Head of caudate nucleus (tissue), 42 donors: ENCODE measurements at regions of chr10 and their contacts with region 1.

Region 1: GRCh38 chr10:102583435-102584417 is 60.6 kb upstream of the TRIM8 start:
- DNase-seq: peak; percentile 70 to 96 (median 91)

Region 2: DNA sequence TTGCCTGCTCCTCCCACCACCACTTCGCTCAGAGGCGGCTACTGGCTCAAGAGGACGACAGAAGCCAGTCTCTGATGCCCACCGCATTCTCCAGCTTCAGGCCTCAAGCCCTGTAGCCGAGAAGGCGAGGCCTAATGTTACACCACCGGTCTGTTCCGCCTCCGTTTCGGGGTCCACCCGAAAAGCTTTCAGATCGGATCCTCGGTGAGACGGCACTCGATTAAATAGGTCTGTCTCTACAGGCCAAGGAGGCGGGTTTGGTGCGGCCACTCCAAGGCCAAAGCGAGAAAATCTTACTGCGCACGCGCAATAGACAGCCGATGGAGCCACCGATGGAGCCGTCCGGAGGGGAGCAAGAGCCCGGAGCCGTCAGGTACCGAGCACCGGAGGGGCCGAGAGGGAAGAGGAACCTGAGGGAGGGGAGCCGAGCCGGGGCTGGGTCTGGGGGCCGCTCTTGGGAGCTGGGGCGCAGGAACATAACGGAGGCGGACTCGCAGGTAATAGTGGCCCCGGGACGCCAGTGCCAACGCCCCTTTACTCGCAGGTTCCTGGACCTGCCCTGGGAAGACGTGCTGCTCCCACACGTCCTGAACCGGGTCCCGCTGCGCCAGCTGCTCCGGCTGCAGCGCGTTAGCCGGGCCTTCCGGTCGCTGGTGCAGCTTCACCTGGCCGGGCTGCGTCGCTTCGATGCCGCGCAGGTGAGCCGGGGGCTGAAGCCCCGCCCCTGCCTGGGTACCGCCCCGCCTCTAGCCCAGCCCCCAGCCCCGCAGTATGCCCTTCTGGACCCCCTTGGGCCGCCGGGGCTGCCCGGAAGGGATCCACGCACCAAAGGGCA is 162.7 kb before region 1 on chr10 and contains the start of gene FBXL15:
- intact Hi-C with region 1: loop called (anchors 10 kb)
- DNase-seq: peak; percentile 87 to 98 (median 94)

Region 3: DNA sequence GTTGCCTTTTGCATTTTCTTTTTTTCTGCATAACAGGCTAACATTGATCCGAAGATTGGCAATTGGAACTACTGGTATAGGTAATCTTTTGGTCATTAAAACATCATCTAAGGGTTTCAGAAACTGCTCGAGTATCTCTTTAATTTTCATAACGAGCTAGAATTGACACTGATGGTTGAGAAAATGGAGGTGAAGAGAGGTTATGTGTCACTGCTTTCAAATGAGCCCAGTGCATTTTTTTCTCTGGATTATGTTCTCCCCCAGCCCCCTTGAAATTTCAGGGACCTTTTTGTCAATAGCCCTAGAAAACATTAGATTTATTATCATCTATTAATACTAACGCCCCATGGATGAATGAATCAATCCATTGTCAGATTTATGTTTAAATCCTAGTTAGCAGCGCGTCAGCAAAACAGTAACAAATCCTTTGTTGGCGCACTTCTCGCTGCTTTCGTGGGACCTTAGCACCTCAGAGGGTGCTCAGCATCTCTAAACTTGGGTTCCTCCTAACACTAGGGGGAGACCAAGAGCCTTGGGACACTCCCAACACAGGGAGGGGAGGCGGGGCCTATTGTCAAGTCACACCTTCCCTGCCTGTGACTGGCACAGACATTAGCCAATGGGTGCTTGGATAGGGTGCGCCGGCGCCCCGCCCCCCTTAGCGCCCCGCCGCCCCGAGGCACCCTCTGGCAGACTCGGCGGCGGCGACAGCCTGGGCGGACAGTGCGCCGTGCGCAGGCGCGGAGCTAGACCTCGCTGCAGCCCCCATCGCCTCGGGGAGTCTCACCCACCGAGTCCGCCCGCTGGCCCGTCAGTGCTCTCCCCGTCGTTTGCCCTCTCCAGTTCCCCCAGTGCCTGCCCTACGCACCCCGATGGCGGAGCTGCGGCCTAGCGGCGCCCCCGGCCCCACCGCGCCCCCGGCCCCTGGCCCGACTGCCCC is 80.2 kb before region 1 on chr10 and contains the start of gene SUFU:
- intact Hi-C with region 1: loop called (anchors 5 kb)
- DNase-seq: peak; percentile 97 to 100 (median 99)

Region 4: GRCh38 chr10:102673819-102674511 is 90.2 kb after region 1 on chr10:
- intact Hi-C with region 1: no loop called
- DNase-seq: peak; percentile 52 to 92 (median 76)